Activated T-helper 1 cell treated with anti-CD3 and anti-CD28 coated beads, Interleukin-12 subunit alpha, Interleukin-12 subunit beta, Interleukin-2, Interleukin-4 antibody, amounts not matched to agents 30 ng/mL and 10 ng/mL and 1 ng/mL, durations not matched to agents 14 hours and 24 hours and 36 hours (primary cell): ENCODE measurements at regions of chr12 and their contacts with region 1.

Region 1: DNA sequence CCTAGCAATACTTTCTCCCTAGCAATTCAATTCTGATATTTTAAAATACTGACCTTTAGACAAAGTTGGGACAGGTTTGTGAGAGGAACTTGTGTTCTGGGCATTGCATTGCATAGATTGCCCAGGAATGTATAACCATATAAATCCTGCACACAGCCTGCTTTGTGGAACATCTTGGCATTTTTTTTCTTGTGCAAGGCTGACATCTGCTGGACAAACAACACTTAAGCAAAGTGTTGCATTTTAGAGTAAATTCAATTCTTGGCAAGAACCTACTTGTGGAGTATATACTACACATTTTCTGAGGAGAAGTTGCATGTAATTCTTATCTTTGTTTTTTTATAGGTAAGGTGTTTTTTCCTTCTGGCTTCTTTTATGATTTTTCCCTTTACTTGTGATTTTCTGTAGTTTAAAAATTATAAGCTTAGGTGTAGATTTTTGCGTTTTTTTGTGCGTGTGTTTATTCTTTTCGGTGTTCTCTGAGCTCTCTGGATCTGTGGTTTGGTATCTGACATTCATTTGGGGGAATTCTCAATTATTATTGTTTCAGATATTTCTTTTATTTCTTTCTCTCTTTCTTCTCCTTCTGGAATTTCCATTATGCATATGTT is 26.4 kb downstream of the TESPA1 start:
- DNase-seq: peak; percentile 28
- H3K4me3 Mint-ChIP-seq: peak overlapping the region; percentile 48
- H3K27ac Mint-ChIP-seq: peak overlapping the region; percentile 88
- H3K4me1 Mint-ChIP-seq: peaks cover 82% of the 10 kb centered on the region
- H3K27me3 Mint-ChIP-seq: no peaks in the 10 kb centered on the region

Region 2: GRCh38 chr12:54749191-54749818 is 208.8 kb before region 1 on chr12:
- intact Hi-C with region 1: loop called (anchors 1 kb)
- DNase-seq: peak; percentile 31
- H3K4me3 Mint-ChIP-seq: no peak overlapping the region
- H3K27ac Mint-ChIP-seq: no peak overlapping the region
- H3K4me1 Mint-ChIP-seq: peaks cover 21% of the 10 kb centered on the region
- H3K27me3 Mint-ChIP-seq: peaks cover 5% of the 10 kb centered on the region

Region 3: DNA sequence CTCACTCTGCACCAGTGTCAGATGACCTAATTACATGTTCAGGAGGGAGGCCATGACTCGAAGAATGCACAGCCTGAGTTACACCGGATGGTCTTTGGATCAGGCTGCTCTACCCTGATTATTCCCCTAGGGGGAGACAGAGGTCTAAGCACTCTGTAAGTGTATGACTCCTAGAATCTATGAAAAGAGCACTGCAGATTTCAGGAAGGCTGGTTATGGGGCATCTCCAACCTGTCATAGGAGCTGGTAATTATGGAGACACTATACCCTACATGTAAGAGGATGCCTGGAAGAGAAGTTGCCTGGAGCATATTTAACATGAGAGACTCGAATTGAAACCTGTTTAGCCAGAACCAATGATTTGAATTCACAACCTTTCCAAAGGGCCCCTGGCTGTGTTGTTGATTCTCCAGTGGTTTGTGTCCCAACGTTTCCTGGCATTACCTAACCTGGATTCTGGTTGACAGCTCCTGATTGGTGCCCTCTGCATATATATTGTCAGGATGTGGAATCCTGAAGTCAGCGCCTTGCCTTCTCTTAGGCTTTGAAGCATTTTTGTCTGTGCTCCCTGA is 104.1 kb before region 1 on chr12 and contains the start of gene MUCL1:
- intact Hi-C with region 1: loop called (anchors 1 kb)
- DNase-seq: peak; percentile 66
- H3K4me3 Mint-ChIP-seq: no peak within 1 kb of the TSS
- H3K27ac Mint-ChIP-seq: no peak within 1 kb of the TSS
- H3K4me1 Mint-ChIP-seq: peaks cover 15% of the 10 kb centered on the region
- H3K27me3 Mint-ChIP-seq: peaks cover 1% of the 10 kb centered on the region
- total RNA-seq, gene MUCL1: not detected in 2 replicates

Region 4: DNA sequence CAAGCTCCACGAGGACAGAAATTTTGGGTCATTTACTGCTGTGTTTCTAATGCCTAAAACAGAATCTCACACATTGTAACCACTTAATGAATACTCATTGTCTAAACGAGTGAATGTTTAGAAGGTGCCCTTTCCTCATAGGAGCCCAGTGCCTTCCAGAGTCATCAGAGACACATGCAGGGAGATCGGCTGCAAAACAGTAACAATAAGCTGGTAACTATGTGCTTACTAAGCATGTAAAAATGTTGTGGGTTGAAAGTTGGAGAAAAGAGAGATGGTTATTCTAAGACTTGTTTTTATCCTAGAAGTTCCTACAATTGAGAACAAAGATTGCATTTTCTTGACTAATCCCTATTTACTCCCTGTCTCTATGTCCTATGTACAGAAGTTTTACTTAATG is 19.0 kb after region 1 on chr12:
- intact Hi-C with region 1: loop called (anchors 1 kb)
- DNase-seq: no peak
- H3K4me3 Mint-ChIP-seq: peak overlapping the region; percentile 90
- H3K27ac Mint-ChIP-seq: peak overlapping the region; percentile 60
- H3K4me1 Mint-ChIP-seq: peaks cover 94% of the 10 kb centered on the region
- H3K27me3 Mint-ChIP-seq: no peaks in the 10 kb centered on the region

Region 5: GRCh38 chr12:54993161-54993835 is 35.1 kb after region 1 on chr12:
- intact Hi-C with region 1: loop called (anchors 1 kb)
- DNase-seq: peak; percentile 41
- H3K4me3 Mint-ChIP-seq: no peak overlapping the region
- H3K27ac Mint-ChIP-seq: no peak overlapping the region
- H3K4me1 Mint-ChIP-seq: peaks cover 46% of the 10 kb centered on the region
- H3K27me3 Mint-ChIP-seq: no peaks in the 10 kb centered on the region